ENCODE measurements at regions of chr15 and their contacts with region 1.

Region 1: DNA sequence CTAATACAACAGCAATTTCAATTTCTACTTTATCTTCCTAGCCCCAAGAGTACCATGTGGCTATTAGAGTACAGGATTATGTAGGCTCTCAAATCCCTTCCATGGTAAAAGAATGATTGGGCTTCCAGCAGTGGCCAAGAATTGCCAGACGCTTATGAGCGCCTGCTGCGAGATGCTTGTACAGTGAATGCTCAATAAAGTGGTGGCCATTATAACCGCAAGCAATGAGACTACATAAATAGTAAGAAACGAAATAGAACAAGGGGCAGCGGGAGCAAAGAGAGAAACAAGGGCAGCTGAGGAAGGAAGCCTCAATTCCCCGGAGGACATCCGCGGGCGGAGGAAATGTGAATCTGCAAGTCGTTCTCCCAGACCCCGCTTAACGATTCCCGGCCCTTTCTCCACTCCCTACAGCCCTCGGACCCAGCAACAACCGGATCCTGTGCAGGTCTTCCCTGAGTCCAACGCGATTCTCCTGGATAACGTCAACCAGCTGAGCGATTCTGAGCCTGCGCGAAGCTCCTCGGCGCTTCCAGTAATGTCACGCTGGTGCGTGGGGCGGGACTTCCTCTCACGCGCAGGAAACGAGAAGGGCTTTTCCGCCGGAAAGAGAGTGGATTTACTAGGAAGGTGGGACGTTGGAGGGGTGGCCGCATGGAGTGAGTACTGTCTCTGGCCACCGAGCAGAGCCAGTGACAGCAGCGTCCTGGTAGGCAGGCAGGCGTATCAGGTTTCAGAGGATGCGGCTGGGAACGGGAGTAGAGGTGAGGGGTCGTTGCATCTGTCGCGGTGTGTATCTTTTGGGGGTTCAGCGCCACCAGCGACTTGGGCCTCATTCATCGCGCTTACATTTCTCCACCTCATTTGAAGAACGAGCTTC is 40.5 kb upstream of the AP3B2 start:
- DNase-seq: peak; percentile 59 to 90 (median 77)
- ATAC-seq: peak; percentile 93
- H3K4me3 ChIP-seq: peak overlapping the region; percentile 84
- H3K4me3 Mint-ChIP-seq: peak overlapping the region; percentile 99
- H3K27ac ChIP-seq: peak overlapping the region; percentile 62 to 82
- H3K27ac Mint-ChIP-seq: peak overlapping the region; percentile 85
- H3K4me1 ChIP-seq: peaks cover 28% of the 10 kb centered on the region
- H3K4me1 Mint-ChIP-seq: peaks cover 57% of the 10 kb centered on the region
- H3K27me3 ChIP-seq: no peaks in the 10 kb centered on the region
- H3K27me3 Mint-ChIP-seq: no peaks in the 10 kb centered on the region
- CTCF ChIP-seq: no peak

Region 2: DNA sequence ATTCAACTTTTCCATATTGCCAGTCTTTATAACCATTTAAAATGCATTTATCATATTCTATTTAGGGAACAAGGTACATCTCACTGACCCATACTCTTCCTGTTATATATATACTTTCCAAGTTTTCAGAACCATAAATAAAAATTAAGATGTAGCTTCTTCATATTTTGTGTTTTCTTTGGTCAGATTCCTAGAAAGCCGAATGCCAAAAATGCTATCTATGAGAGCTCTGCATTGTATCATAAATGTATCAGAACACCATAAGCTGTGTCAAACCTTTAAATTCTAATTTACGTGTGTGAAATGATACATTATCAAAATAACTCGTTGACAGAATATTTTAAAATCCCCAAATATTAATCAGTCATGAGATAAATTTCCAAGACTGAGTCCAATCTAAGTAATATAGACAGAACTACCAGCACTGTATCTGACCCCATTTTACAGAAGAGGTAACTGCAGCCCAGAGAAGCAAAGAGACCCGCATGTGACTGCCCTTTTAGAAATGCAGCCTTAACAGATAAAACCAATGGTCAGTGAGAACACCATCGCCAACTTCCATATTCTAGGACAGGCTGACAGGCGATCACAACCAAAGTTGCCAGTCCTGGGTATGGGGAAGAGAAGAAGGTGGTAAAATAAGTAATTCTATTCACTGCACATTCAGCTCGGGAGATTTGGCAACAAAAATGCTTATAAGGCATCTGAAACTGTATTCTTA is 193.7 kb before region 1 on chr15:
- CTCF ChIA-PET with region 1: no interaction called
- POLR2A ChIA-PET with region 1: no interaction called
- intact Hi-C with region 1: no loop called
- DNase-seq: no peak
- ATAC-seq: no peak
- H3K4me3 ChIP-seq: no peak overlapping the region
- H3K4me3 Mint-ChIP-seq: no peak overlapping the region
- H3K27ac ChIP-seq: no peak overlapping the region
- H3K27ac Mint-ChIP-seq: no peak overlapping the region
- H3K4me1 ChIP-seq: no peaks in the 10 kb centered on the region
- H3K4me1 Mint-ChIP-seq: no peaks in the 10 kb centered on the region
- H3K27me3 ChIP-seq: no peaks in the 10 kb centered on the region
- H3K27me3 Mint-ChIP-seq: peaks cover 13% of the 10 kb centered on the region
- CTCF ChIP-seq: no peak

Region 3: DNA sequence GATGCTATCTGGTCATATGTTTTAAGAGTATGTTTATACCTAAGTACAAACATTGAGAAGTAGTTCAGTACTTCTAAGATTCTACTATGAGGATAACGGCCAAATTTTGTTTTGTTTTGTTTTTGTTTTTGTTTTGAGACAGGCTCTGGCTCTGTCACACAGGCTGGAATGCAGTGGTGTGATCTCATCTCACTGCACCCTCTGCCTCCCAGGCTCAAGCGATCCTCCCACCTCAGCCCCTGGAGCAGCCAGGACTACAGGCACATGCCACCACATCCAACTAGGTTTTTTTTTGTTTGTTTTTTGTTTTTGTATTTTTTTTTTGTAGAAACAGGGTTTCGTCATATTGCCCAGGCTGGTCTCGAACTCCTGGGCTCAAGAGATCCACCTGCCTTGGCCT is 162.4 kb before region 1 on chr15:
- CTCF ChIA-PET with region 1: no interaction called
- POLR2A ChIA-PET with region 1: no interaction called
- intact Hi-C with region 1: no loop called
- DNase-seq: no peak
- ATAC-seq: no peak
- H3K4me3 ChIP-seq: no peak overlapping the region
- H3K4me3 Mint-ChIP-seq: no peak overlapping the region
- H3K27ac ChIP-seq: no peak overlapping the region
- H3K27ac Mint-ChIP-seq: no peak overlapping the region
- H3K4me1 ChIP-seq: no peaks in the 10 kb centered on the region
- H3K4me1 Mint-ChIP-seq: no peaks in the 10 kb centered on the region
- H3K27me3 ChIP-seq: peaks cover 4 to 6% of the 10 kb centered on the region in 2 experiments
- H3K27me3 Mint-ChIP-seq: peaks cover 18% of the 10 kb centered on the region
- CTCF ChIP-seq: no peak

Region 4: DNA sequence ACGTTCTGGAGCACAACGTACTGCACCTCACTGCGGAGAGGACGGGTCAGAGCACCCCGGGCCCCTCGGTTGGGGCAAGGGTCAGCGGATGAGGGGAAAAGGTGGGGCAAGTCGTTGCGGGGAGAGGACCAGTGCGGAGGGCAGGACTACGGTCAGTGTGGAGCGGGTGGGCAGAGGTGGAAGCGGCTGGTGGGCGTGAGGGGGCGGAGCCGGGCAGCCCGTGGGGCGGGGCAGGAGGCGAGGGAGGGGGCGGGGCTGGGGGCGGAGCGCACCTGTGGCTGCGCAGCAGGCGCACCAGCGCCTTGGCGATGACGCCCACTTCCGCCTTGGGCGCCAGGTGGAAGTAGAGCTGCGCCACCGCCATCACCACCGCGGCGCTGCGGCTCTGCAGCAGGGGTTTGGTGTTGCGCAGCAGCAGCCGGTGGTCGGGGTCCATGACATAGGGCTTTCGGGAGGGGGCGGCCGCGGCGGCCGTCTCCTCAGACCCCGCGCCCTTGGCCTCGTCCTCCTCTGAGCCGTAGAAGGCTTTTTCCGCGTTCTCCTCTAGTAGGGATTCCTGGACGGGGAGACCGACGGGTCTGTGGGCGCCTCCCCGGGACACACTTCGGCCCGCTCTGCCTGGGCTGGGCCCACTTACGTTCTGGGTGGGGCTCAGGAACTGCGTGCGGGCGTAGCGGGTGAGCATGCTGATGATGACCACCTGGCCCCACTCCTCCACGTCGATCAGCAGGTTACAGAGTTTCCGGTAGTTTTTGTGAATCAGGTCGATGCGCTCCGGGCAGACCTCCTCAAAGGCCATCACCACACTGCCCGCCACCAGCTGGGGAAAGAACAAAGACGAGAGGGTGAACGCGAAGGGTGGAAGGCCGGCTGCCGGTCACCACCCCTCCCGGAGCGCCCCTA is 69.7 kb before region 1 on chr15:
- CTCF ChIA-PET with region 1: interaction called, 5 read pairs
- POLR2A ChIA-PET with region 1: interaction called, 15 read pairs
- intact Hi-C with region 1: loop called in 1 of 2 experiments (anchors 2 kb)
- DNase-seq: peak; percentile 74 to 94 (median 82)
- ATAC-seq: peak; percentile 98
- H3K4me3 ChIP-seq: peak overlapping the region; percentile 91
- H3K4me3 Mint-ChIP-seq: peak overlapping the region; percentile 94
- H3K27ac ChIP-seq: peak overlapping the region; percentile 70 to 74
- H3K27ac Mint-ChIP-seq: peak overlapping the region; percentile 95
- H3K4me1 ChIP-seq: peaks cover 19% of the 10 kb centered on the region
- H3K4me1 Mint-ChIP-seq: peaks cover 15% of the 10 kb centered on the region
- H3K27me3 ChIP-seq: no peaks in the 10 kb centered on the region
- H3K27me3 Mint-ChIP-seq: no peaks in the 10 kb centered on the region
- CTCF ChIP-seq: peak; percentile 35

Region 5: DNA sequence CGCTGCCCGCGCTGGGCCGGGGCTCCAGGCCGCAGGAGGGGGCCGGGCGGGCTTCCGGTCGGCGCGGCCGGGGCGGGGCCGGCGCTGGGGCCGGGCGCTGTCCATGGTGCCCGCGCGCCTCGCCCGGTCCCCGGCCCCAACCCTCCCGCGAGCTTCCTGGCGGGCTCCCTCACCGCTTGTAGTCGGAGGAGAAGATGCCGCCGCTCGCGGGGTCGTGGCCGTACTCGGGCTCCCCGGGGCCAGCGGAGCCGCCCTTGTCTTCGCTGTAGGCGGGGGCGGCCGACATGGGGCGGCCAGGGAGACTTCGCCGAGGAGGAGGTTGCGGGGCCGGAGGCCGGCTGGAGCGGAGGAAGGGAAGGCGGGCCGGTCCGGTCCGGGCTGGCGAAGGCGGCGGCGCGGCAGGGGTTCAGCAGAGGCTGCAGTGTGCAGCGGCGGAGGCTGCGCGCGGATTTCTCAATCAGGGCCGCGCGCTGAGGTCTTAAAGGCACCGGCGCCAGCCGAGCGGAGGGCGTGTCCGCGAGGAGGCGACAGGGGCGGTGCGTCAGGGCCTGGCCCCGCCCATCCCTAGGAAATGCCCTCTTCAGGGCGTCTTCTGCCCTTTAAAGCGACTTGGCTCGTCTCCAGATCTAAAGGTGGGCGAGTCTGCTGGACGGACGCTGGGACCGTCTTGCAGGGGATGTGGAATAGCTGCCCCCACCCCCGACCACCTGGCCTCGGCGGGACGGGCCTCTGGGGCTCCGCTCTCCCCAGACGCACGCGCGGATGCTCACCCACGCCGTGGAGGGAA is 40.6 kb before region 1 on chr15 and contains the start of gene AP3B2:
- CTCF ChIA-PET with region 1: no interaction called
- POLR2A ChIA-PET with region 1: interaction called, 3 read pairs
- intact Hi-C with region 1: loop called in 1 of 2 experiments (anchors 1 kb)
- DNase-seq: peak; percentile 38 to 84 (median 60)
- ATAC-seq: peak; percentile 92
- H3K4me3 ChIP-seq: peak within 1 kb of the TSS; percentile 54
- H3K4me3 Mint-ChIP-seq: peak within 1 kb of the TSS; percentile 70
- H3K27ac ChIP-seq: no peak within 1 kb of the TSS
- H3K27ac Mint-ChIP-seq: no peak within 1 kb of the TSS
- H3K4me1 ChIP-seq: peaks cover 17% of the 10 kb centered on the region
- H3K4me1 Mint-ChIP-seq: no peaks in the 10 kb centered on the region
- H3K27me3 ChIP-seq: peaks cover 11 to 22% of the 10 kb centered on the region in 2 experiments
- H3K27me3 Mint-ChIP-seq: peaks cover 32% of the 10 kb centered on the region
- CTCF ChIP-seq: no peak
- total RNA-seq, gene AP3B2: 0.25 to 0.98 TPM

Region 6: GRCh38 chr15:82985688-82986441 is 235.7 kb after region 1 on chr15 and contains the start of gene RAMAC:
- CTCF ChIA-PET with region 1: no interaction called
- POLR2A ChIA-PET with region 1: interaction called, 8 read pairs
- intact Hi-C with region 1: loop called in 1 of 2 experiments (anchors 5 kb)
- DNase-seq: peak; percentile 84 to 98 (median 92)
- ATAC-seq: peak; percentile 92
- H3K4me3 ChIP-seq: peak within 1 kb of the TSS; percentile 94
- H3K4me3 Mint-ChIP-seq: peak within 1 kb of the TSS; percentile 97
- H3K27ac ChIP-seq: peak within 1 kb of the TSS; percentile 54 to 65
- H3K27ac Mint-ChIP-seq: peak within 1 kb of the TSS; percentile 87
- H3K4me1 ChIP-seq: peaks cover 18% of the 10 kb centered on the region
- H3K4me1 Mint-ChIP-seq: peaks cover 27% of the 10 kb centered on the region
- H3K27me3 ChIP-seq: no peaks in the 10 kb centered on the region
- H3K27me3 Mint-ChIP-seq: no peaks in the 10 kb centered on the region
- CTCF ChIP-seq: no peak
- total RNA-seq, gene RAMAC: 25.5 to 26.5 TPM

Region 7: DNA sequence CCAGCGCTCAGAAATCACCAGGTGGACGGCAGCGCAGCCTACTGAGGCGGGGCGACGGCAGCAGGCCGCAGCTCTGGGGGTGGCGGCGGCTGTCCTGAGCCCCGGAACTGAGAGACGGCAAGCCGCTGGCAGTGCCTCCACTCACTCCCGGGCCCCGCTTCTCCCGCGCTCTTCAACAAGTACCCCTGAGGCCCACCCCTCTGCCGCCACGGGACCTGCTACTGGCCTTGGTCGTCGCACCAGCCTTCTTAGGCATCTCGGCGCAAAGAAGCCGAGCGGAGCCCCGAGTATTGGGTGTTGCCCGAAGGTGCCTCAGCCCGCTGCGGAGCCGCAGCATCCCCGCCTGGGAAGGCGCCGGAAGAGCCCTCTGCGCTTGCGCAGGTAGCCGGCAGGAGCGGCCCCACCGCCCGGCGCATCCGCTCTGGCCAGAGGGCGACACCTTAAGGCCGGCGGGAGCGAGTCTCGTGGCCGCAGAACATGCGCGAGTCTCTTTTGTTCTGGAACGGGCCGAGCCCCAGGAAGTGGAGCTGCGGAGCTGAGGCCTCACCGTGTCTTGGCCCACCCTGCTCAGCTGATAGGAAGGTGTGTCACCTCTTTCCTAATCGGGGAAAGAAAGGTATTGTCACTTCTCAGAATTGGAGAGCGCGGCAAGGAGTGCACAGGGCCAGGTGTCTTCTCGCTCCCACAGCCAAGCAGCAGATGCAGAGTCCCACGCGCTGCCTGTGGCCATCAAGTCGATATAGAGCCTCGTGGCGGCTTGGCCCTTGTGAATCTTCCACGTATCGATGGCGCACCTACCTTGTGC is 261.3 kb after region 1 on chr15 and contains the start of gene C15orf40:
- CTCF ChIA-PET with region 1: interaction called, 9 read pairs
- POLR2A ChIA-PET with region 1: interaction called, 3 read pairs
- intact Hi-C with region 1: loop called in 1 of 2 experiments (anchors 5 kb)
- DNase-seq: peak; percentile 68 to 94 (median 82)
- ATAC-seq: peak; percentile 81
- H3K4me3 ChIP-seq: peak within 1 kb of the TSS; percentile 82
- H3K4me3 Mint-ChIP-seq: peak within 1 kb of the TSS; percentile 100
- H3K27ac ChIP-seq: peak within 1 kb of the TSS; percentile 70 to 84
- H3K27ac Mint-ChIP-seq: peak within 1 kb of the TSS; percentile 88
- H3K4me1 ChIP-seq: peaks cover 24% of the 10 kb centered on the region
- H3K4me1 Mint-ChIP-seq: peaks cover 56% of the 10 kb centered on the region
- H3K27me3 ChIP-seq: no peaks in the 10 kb centered on the region
- H3K27me3 Mint-ChIP-seq: no peaks in the 10 kb centered on the region
- CTCF ChIP-seq: no peak
- total RNA-seq, gene C15orf40: 7.4 to 11.0 TPM

Region 8: DNA sequence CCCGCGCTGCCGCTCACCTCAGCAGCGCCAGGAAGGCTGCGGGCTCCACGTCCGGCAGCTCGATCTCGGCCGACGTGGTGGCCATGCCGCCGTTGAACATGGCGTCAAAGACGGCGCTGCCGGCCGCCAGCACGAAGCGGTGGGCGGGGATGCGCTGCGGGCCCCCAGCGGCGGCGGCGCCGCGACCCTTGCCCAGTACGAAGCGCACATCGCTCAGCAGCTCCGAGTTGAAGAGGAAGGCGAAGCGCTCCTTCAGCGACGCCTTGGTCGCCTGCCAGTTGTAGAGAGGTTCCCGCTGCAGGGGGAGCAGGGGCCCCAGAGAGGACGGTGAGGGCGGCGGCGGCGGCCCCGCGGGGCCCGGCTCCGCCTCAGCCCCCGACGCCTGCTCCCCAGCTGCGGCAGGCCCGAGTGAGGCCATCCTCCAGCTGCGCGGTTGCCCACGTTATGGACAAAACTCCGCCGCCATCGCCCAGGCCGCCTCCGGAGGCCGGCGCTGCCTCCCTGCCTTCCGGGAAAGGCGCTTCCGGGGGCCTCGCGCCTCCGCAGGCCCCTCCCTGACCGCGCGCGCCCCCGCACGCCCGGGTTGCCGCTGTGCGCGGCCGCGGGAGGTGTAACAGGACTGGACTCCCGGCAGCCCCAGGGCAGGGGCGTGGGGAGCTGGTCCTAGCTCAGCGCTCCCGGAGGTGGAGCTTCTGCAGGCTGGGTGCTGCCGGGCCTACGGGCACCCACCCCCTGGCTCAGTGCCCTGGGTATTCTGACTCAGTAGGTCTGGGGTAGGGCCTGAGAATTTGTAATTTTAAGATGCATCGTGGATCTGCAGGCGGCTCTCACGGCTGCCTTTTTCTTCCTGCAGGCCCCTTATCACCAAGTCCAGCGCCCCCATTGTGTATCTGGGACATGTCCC is 316.8 kb after region 1 on chr15 and contains the start of gene BTBD1:
- CTCF ChIA-PET with region 1: no interaction called
- POLR2A ChIA-PET with region 1: interaction called, 4 read pairs
- intact Hi-C with region 1: loop called in 1 of 2 experiments (anchors 5 kb)
- DNase-seq: peak; percentile 53 to 90 (median 74)
- ATAC-seq: peak; percentile 73
- H3K4me3 ChIP-seq: peak within 1 kb of the TSS; percentile 82
- H3K4me3 Mint-ChIP-seq: peak within 1 kb of the TSS; percentile 88
- H3K27ac ChIP-seq: peak within 1 kb of the TSS; percentile 57 to 74
- H3K27ac Mint-ChIP-seq: peak within 1 kb of the TSS; percentile 81
- H3K4me1 ChIP-seq: peaks cover 22% of the 10 kb centered on the region
- H3K4me1 Mint-ChIP-seq: peaks cover 9% of the 10 kb centered on the region
- H3K27me3 ChIP-seq: no peaks in the 10 kb centered on the region
- H3K27me3 Mint-ChIP-seq: no peaks in the 10 kb centered on the region
- CTCF ChIP-seq: no peak
- total RNA-seq, gene BTBD1: 26.3 to 27.5 TPM

Measured in CD4-positive, alpha-beta T cell (primary cell).